Head of caudate nucleus (tissue), 42 donors: ENCODE measurements at regions of chr5 and their contacts with region 1.

Region 1: DNA sequence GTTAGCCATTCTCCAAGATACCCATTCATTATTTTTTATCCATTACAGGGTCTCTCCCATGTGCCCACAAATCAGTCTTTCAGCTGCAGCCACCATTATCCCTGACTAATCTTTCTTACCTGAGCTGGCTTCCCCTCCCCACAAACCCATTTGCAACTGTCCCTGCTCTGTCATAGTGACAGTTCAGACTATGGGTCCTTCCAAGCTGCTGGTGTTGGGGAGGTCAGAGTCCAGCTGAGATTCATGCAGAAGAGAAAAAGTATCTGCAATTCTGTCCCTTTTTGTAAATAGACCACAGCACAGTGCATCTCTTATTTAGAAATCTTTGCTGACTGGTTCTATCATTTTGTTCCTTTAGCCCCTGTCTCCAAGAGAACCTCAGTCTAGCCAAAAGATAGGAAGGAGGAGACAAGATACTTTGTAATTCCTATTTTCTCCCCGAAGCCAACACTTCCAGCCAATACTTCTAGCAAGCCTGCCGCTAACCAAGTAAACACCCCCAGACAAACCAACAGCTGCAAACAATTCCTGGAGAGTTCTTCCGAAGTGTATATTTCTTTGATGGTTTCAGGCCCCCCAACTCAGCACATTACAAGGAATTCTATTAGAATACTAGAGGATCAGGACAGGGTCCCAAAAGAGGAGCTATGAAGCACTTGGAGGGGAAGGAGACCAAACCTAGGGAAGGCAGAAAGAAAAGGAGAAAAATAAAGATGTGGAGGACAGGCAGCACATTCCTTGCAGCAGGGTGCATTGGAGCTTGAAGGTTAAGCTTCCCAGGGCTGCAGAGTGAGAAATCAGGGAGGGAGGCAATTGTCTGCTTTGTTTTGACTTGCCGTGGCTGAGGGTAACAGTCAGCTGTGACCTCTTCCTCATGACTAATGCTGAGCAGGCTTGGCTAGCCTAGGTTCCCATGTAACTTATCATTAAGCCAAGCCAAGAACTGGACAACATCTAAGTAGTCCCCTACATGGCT is 148.5 kb downstream of the SGCD start:
- DNase-seq: peak in 8 of 42 donors; percentile 6 to 39 (median 14)

Region 2: DNA sequence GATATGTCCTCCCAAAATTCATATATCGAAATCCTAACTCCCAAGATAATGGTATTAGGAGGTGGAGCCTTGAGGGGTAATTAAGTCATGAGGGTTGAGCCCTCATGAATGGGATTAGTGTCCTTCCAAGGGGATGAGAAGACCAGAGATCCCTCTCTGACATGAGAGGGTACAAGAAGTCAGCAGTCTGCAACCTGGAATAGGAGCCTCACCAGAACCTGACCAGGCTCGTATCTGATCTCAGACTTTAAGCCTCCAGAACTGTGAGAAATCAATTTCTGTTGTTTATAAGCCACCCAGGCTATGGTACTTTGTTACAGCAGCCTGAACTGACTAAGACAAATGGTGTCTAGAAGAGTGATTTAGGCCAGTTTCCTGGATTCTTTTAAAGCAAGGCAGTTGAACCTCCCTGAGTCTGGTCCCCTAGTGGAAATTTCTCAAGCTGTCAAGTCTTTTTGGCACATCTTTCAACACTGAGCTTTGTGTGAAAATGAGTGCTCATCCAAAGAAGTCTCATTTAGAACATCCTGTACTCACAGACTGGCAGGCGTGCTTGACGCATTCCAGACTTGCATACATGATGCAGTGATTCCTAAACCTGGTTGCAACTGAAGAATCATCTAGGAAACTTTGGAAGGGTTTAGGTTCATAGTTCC is 119.8 kb after region 1 on chr5:
- intact Hi-C with region 1: loop called (anchors 10 kb)
- DNase-seq: peak in 1 of 42 donors; percentile 22